ENCODE measurements at regions of chr15 and their contacts with region 1.

Region 1: DNA sequence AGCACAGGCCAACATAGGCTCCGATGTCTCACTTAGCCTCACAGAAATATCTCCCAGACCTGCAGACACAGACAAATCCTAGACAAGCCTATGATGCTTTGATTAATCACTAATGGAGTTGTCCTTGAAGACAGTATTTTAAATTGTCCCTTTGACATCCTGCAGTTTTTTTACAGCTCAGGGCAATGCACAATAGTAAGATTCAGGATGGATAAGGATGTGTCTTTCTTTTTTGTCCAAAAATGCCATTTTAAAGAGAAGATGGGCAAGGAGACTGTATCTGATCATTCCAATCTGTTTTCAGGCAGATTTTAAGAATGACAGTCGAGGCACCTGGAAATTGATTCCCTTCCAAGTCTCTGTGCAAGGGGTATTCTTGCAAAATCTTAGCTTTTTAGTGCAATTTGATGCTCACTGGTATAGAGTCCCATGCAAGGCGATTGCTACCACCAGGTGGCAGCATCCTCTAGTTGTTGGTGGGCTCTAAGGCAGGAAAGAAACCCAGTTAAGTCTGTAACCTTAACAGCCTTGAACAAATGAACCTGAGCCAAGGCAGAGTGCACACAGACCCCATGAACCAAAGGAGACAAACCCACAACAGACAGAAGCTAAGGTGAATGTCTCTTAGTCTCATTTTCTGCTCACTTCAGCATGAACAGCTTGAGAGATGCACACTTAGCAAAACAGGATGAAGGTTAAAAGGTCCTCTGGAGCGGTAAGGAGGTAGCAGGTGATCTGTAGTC is 51.2 kb upstream of the MINAR1 start:
- DNase-seq: peak; percentile 70 to 79
- ATAC-seq: peak; percentile 97 to 100
- H3K4me3 ChIP-seq: no peak overlapping the region
- H3K27ac ChIP-seq: no peak overlapping the region
- H3K4me1 ChIP-seq: no peaks in the 10 kb centered on the region
- CTCF ChIP-seq: peak; percentile 98
- EP300 ChIP-seq: no peak
- POLR2A ChIP-seq: no peak
- RAD21 ChIP-seq: peak; percentile 96

Region 2: GRCh38 chr15:79370716-79371115 is 10.2 kb before region 1 on chr15:
- CTCF ChIA-PET with region 1: interaction called, 108 read pairs
- POLR2A ChIA-PET with region 1: no interaction called
- DNase-seq: no peak
- ATAC-seq: no peak
- H3K4me3 ChIP-seq: no peak overlapping the region
- H3K27ac ChIP-seq: no peak overlapping the region
- H3K4me1 ChIP-seq: no peaks in the 10 kb centered on the region
- CTCF ChIP-seq: no peak
- EP300 ChIP-seq: no peak
- POLR2A ChIP-seq: no peak
- RAD21 ChIP-seq: no peak

Region 3: DNA sequence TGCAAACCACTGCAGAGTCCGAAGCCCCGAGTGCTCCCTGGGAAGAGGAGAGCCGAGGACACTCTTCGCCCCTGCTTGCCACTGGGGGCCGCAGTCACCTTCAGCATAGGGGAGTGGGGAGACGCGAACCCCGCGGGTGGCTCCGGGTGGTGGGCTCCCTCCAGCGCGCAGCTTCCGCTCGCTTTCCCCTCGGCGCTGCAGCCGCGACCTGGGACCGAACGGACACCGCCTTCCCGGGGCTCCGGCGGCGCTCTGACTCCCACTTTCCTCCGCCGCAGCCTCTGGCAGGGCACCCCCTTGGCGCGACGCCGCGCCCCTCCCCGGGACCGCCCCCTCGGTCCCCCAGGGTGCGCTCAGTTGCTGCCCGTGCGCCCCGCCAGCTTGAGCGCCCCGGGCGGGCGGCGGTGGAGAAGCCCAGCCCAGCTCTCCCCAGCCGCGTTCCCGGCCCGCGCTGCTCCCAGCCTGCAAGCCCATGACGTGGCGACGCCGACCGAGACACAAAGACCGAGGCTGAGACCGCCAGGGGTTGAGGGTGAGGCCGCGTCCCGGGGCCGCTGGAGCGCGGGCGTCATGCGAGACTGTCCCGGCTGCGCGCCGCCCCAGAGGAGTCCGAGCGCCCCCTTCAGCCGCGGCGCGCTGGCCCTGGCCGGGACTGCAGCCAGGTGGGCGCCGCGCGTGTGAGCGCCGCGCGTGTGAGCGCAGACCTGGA is 50.9 kb after region 1 on chr15 and contains the start of gene MINAR1:
- CTCF ChIA-PET with region 1: interaction called, 28 read pairs
- POLR2A ChIA-PET with region 1: no interaction called
- DNase-seq: peak; percentile 39 to 50
- ATAC-seq: peak; percentile 79 to 91
- H3K4me3 ChIP-seq: peak within 1 kb of the TSS; percentile 58
- H3K27ac ChIP-seq: peak within 1 kb of the TSS; percentile 28 to 67; a peak in 4 of 6 replicates
- H3K4me1 ChIP-seq: no peaks in the 10 kb centered on the region
- CTCF ChIP-seq: peak; percentile 52
- EP300 ChIP-seq: no peak
- POLR2A ChIP-seq: no peak
- RAD21 ChIP-seq: peak; percentile 23 to 51; a peak in 2 of 5 replicates
- polyA plus RNA-seq, gene MINAR1: 0.88 and 1.5 TPM in 2 replicates

Region 4: GRCh38 chr15:79596051-79596507 is 215.2 kb after region 1 on chr15:
- CTCF ChIA-PET with region 1: interaction called, 109 read pairs
- POLR2A ChIA-PET with region 1: no interaction called
- DNase-seq: peak; percentile 95 to 96
- ATAC-seq: peak; percentile 89 to 98
- H3K4me3 ChIP-seq: no peak overlapping the region
- H3K27ac ChIP-seq: no peak overlapping the region
- H3K4me1 ChIP-seq: no peaks in the 10 kb centered on the region
- CTCF ChIP-seq: peak; percentile 92
- EP300 ChIP-seq: no peak
- POLR2A ChIP-seq: no peak
- RAD21 ChIP-seq: peak; percentile 81 to 96

Region 5: GRCh38 chr15:79853458-79854328 is 472.8 kb after region 1 on chr15:
- CTCF ChIA-PET with region 1: interaction called, 405 read pairs
- POLR2A ChIA-PET with region 1: no interaction called
- DNase-seq: peak; percentile 71 to 90
- ATAC-seq: peak; percentile 98 to 99
- H3K4me3 ChIP-seq: no peak overlapping the region
- H3K27ac ChIP-seq: peak overlapping the region; percentile 10 to 42; a peak in 4 of 6 replicates
- H3K4me1 ChIP-seq: peaks cover 14% of the 10 kb centered on the region
- CTCF ChIP-seq: peak; percentile 98
- EP300 ChIP-seq: no peak
- POLR2A ChIP-seq: no peak
- RAD21 ChIP-seq: peak; percentile 91 to 92

Region 6: DNA sequence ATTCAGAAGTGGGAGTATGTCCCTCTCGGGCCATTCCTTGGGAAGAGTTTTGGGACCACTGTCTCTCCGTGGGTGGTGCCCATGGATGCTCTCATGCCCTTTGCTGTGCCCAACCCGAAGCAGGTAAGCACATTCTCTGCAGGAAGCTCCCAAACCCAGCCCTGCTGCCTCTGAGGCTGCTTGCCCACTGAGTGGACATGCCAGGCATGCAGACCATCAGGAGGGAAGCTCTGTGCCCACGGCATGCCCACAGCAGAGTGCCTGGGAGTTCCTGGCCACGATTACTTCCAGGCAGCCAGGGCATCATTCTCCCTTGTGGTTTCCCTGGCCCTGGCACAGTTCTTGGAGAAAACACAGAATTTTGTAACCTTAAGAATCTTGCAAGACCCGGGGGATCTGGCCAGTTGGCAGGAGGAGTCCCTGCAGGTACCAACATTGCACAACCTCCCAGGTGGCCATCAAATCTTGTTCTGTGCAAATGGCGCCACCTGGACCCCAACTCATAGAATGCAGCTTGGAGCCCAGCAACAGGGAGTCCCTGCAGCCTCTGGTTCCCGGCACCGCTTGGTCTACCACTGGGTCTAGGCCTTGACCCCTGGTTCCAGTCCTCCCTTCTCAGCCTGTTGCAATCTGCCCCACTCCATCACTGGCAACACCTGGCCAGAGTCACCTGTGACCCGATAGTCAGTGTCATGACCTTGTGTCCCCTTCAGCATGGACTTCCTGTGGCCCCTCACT is 792.3 kb after region 1 on chr15:
- CTCF ChIA-PET with region 1: interaction called, 25 read pairs
- POLR2A ChIA-PET with region 1: no interaction called
- DNase-seq: peak; percentile 74 to 79
- ATAC-seq: peak; percentile 84 to 93
- H3K4me3 ChIP-seq: no peak overlapping the region
- H3K27ac ChIP-seq: no peak overlapping the region
- H3K4me1 ChIP-seq: no peaks in the 10 kb centered on the region
- CTCF ChIP-seq: peak; percentile 73
- EP300 ChIP-seq: no peak
- POLR2A ChIP-seq: no peak
- RAD21 ChIP-seq: peak; percentile 89 to 95